Activated CD8-positive, alpha-beta T cell treated with anti-CD3 and anti-CD28 coated beads, Interleukin-2, amount 10 ng/mL, durations not matched to agents 7 days and 5 days (primary cell): ENCODE measurements at regions of chr3 and their contacts with region 1.

Region 1: GRCh38 chr3:197906023-197906849 is 43.8 kb upstream of the RPL35A start:
- DNase-seq: peak; percentile 86
- ATAC-seq: peak; percentile 91
- H3K4me3 Mint-ChIP-seq: no peak overlapping the region
- H3K27ac Mint-ChIP-seq: no peak overlapping the region
- H3K4me1 Mint-ChIP-seq: peaks cover 2% of the 10 kb centered on the region
- H3K27me3 Mint-ChIP-seq: no peaks in the 10 kb centered on the region

Region 2: DNA sequence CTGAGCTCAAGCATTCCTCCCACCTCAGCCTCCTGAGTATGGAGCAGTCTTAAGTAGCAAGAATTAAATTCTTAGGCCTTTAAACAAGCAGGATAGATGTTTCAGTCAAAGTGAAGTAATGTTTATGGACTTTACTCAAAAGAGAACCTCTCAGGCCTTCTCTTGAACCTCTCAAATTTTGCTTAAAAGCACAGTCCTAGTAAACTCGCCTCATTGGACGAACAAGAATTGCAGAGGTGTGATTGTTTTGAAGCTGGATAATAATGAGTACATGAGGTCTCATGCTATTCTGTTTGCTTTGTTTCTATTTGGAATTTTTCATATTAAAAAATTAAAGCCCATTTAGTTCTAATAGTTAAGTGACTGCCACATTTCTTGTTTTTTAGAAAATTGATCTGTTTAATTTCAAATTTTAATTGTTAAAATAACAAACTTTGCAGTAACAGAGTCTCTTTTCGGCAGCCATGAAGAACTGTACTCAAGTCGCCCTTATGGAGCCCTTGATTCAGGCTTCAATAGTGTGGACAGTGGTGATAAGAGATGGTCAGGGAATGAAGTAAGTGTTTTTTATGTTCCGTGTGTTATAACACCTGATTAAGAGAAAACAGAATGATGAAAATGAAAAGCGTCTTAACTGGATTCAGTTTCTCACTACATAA is 75.8 kb before region 1 on chr3:
- CTCF ChIA-PET with region 1: no interaction called
- POLR2A ChIA-PET with region 1: no interaction called
- DNase-seq: no peak
- ATAC-seq: no peak
- H3K4me3 Mint-ChIP-seq: no peak overlapping the region
- H3K27ac Mint-ChIP-seq: no peak overlapping the region
- H3K4me1 Mint-ChIP-seq: no peaks in the 10 kb centered on the region
- H3K27me3 Mint-ChIP-seq: no peaks in the 10 kb centered on the region

Region 3: GRCh38 chr3:197889204-197889930 is 16.9 kb before region 1 on chr3:
- CTCF ChIA-PET with region 1: interaction called, 24 read pairs
- POLR2A ChIA-PET with region 1: interaction called, 3 read pairs
- DNase-seq: no peak
- ATAC-seq: no peak
- H3K4me3 Mint-ChIP-seq: no peak overlapping the region
- H3K27ac Mint-ChIP-seq: no peak overlapping the region
- H3K4me1 Mint-ChIP-seq: no peaks in the 10 kb centered on the region
- H3K27me3 Mint-ChIP-seq: no peaks in the 10 kb centered on the region

Region 4: DNA sequence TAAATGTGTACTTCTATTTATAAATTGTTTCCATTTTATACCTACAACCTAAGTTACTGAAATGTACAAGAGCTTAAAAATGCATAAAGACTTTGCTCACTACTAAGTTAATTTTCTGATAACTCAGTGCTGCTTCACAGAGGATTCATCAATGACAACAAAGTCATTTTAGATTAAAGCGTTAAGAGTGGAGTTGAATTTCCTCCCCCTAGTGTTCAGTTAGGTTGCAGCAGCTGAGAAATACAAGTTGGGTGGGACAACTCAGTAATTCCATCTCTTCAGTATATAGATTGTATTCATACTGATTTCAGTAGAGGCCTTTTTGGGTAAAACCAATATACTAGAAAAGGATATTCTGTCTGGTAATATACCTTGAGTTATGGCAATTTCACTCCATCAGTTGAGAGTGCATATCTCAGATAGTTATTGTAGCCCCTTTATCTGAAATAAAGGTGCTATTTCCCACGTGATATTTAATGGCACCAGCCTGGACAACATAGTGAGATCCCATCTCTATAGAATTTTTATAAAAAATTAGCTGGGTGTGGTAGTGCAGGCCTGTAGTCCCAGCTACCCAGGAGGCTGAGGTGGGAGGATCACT is 36.8 kb after region 1 on chr3:
- CTCF ChIA-PET with region 1: interaction called, 31 read pairs
- POLR2A ChIA-PET with region 1: no interaction called
- DNase-seq: peak; percentile 60
- ATAC-seq: peak; percentile 76
- H3K4me3 Mint-ChIP-seq: no peak overlapping the region
- H3K27ac Mint-ChIP-seq: no peak overlapping the region
- H3K4me1 Mint-ChIP-seq: peaks cover 7% of the 10 kb centered on the region
- H3K27me3 Mint-ChIP-seq: no peaks in the 10 kb centered on the region